CD4-positive, alpha-beta memory T cell (primary cell): ENCODE measurements at regions of chr2 and their contacts with region 1.

Region 1: GRCh38 chr2:223993621-223994232 is 36.5 kb downstream of the MRPL44 start:
- DNase-seq: peak; percentile 45 to 62 (median 51)
- H3K4me3 ChIP-seq: no peak overlapping the region
- H3K4me3 Mint-ChIP-seq: no peak overlapping the region
- H3K27ac ChIP-seq: no peak overlapping the region
- H3K27ac Mint-ChIP-seq: no peak overlapping the region
- H3K4me1 ChIP-seq: no peaks in the 10 kb centered on the region
- H3K4me1 Mint-ChIP-seq: no peaks in the 10 kb centered on the region
- H3K27me3 ChIP-seq: no peaks in the 10 kb centered on the region
- H3K27me3 Mint-ChIP-seq: peaks cover 0 to 2% of the 10 kb centered on the region in 2 donors

Region 2: DNA sequence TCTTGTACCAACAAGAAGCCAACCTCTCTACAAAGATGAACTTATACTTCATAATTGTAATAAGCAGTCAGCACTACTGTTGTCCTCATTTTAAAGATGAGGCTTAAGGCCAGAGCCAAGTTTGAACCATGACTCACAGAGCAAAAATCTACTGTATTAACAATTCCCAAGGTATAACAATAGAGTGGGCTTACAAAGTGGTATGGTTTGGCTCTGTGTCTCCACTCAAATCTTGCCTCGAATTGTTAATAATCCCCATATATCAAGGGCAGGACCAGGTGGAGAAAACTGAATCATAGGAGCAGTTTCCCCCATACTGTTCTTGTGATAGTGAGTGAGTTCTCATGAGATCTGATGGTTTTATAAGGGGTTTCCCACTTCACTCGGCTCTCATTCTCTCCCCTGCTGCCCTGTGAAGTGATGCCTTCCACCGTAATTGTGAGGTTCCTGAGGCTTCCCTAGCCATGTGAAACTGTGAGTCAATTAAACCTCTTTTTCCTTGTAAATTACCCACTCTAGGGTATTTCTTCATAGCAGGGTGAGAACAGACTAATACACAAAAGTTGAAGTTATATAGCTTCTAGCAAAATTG is 17.0 kb before region 1 on chr2:
- CTCF ChIA-PET with region 1: interaction called, 71 read pairs
- POLR2A ChIA-PET with region 1: no interaction called
- intact Hi-C with region 1: no loop called
- DNase-seq: no peak
- H3K4me3 ChIP-seq: no peak overlapping the region
- H3K4me3 Mint-ChIP-seq: no peak overlapping the region
- H3K27ac ChIP-seq: no peak overlapping the region
- H3K27ac Mint-ChIP-seq: no peak overlapping the region
- H3K4me1 ChIP-seq: no peaks in the 10 kb centered on the region
- H3K4me1 Mint-ChIP-seq: no peaks in the 10 kb centered on the region
- H3K27me3 ChIP-seq: no peaks in the 10 kb centered on the region
- H3K27me3 Mint-ChIP-seq: no peaks in the 10 kb centered on the region

Region 3: GRCh38 chr2:224025874-224026273 is 32.1 kb after region 1 on chr2:
- CTCF ChIA-PET with region 1: interaction called, 17 read pairs
- POLR2A ChIA-PET with region 1: no interaction called
- intact Hi-C with region 1: loop called (anchors 5 kb)
- DNase-seq: peak; percentile 39 to 80 (median 54)
- H3K4me3 ChIP-seq: no peak overlapping the region
- H3K4me3 Mint-ChIP-seq: peak overlapping the region; percentile 4 to 80 (median 61)
- H3K27ac ChIP-seq: no peak overlapping the region
- H3K27ac Mint-ChIP-seq: peak overlapping the region; percentile 76 to 90 (median 84)
- H3K4me1 ChIP-seq: peaks cover 27% of the 10 kb centered on the region
- H3K4me1 Mint-ChIP-seq: peaks cover 27 to 52% (median 35%) of the 10 kb centered on the region in 4 donors
- H3K27me3 ChIP-seq: no peaks in the 10 kb centered on the region
- H3K27me3 Mint-ChIP-seq: no peaks in the 10 kb centered on the region

Region 4: GRCh38 chr2:224042191-224042696 is 48.5 kb after region 1 on chr2:
- CTCF ChIA-PET with region 1: no interaction called
- POLR2A ChIA-PET with region 1: no interaction called
- intact Hi-C with region 1: no loop called
- DNase-seq: no peak
- H3K4me3 ChIP-seq: no peak overlapping the region
- H3K4me3 Mint-ChIP-seq: no peak overlapping the region
- H3K27ac ChIP-seq: no peak overlapping the region
- H3K27ac Mint-ChIP-seq: no peak overlapping the region
- H3K4me1 ChIP-seq: peaks cover 19% of the 10 kb centered on the region
- H3K4me1 Mint-ChIP-seq: peaks cover 7 to 12% (median 11%) of the 10 kb centered on the region in 4 donors
- H3K27me3 ChIP-seq: peaks cover under 1% of the 10 kb centered on the region
- H3K27me3 Mint-ChIP-seq: peaks cover 44 to 45% of the 10 kb centered on the region in 2 donors

Region 5: GRCh38 chr2:224284134-224284946 is 290.6 kb after region 1 on chr2:
- CTCF ChIA-PET with region 1: interaction called, 142 read pairs
- POLR2A ChIA-PET with region 1: no interaction called
- intact Hi-C with region 1: loop called (anchors 1 kb)
- DNase-seq: peak in 4 of 5 donors; percentile 30 to 44 (median 33)
- H3K4me3 ChIP-seq: no peak overlapping the region
- H3K4me3 Mint-ChIP-seq: no peak overlapping the region
- H3K27ac ChIP-seq: no peak overlapping the region
- H3K27ac Mint-ChIP-seq: no peak overlapping the region
- H3K4me1 ChIP-seq: no peaks in the 10 kb centered on the region
- H3K4me1 Mint-ChIP-seq: no peaks in the 10 kb centered on the region
- H3K27me3 ChIP-seq: no peaks in the 10 kb centered on the region
- H3K27me3 Mint-ChIP-seq: peaks cover 26 to 31% of the 10 kb centered on the region in 2 donors

Region 6: DNA sequence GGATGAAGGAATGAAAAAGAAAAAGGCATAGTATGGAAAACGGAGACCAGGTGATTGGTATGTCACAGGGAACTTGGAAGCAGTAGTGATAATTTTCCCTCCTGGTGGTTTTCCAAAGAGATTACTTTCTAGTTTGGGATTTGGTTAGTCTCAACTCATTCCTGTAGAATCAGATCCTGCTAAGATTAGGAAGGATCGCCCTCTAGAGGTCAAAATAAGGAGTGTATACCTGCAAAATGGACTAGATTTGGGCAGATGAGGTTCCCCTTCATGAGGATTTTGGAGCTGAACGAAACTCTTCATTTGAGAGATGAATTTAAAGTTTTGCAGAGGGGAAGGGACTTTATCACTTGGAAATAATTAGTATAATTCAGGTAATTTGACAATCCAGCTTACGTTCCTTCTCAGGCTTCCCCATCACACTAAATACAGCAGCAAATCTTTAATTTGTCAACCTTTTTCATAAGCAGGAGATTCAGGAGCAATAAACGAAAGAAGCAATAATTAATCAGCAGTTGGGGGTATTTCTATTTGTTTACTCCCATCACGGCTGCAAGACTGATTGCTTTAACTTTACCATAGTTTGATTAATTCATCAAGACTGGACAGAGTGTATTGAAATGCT is 657.2 kb after region 1 on chr2:
- CTCF ChIA-PET with region 1: interaction called, 18 read pairs
- POLR2A ChIA-PET with region 1: no interaction called
- intact Hi-C with region 1: loop called (anchors 1 kb)
- DNase-seq: peak in 4 of 5 donors; percentile 49 to 51 (median 50)
- H3K4me3 ChIP-seq: no peak overlapping the region
- H3K4me3 Mint-ChIP-seq: no peak overlapping the region
- H3K27ac ChIP-seq: no peak overlapping the region
- H3K27ac Mint-ChIP-seq: peak overlapping the region in 1 of 7 donors; percentile 4
- H3K4me1 ChIP-seq: no peaks in the 10 kb centered on the region
- H3K4me1 Mint-ChIP-seq: peaks cover 0 to 3% (median under 1%) of the 10 kb centered on the region in 4 donors
- H3K27me3 ChIP-seq: no peaks in the 10 kb centered on the region
- H3K27me3 Mint-ChIP-seq: peaks cover 3 to 9% of the 10 kb centered on the region in 2 donors